ENCODE measurements at regions of chr15 and their contacts with region 1.

Region 1: DNA sequence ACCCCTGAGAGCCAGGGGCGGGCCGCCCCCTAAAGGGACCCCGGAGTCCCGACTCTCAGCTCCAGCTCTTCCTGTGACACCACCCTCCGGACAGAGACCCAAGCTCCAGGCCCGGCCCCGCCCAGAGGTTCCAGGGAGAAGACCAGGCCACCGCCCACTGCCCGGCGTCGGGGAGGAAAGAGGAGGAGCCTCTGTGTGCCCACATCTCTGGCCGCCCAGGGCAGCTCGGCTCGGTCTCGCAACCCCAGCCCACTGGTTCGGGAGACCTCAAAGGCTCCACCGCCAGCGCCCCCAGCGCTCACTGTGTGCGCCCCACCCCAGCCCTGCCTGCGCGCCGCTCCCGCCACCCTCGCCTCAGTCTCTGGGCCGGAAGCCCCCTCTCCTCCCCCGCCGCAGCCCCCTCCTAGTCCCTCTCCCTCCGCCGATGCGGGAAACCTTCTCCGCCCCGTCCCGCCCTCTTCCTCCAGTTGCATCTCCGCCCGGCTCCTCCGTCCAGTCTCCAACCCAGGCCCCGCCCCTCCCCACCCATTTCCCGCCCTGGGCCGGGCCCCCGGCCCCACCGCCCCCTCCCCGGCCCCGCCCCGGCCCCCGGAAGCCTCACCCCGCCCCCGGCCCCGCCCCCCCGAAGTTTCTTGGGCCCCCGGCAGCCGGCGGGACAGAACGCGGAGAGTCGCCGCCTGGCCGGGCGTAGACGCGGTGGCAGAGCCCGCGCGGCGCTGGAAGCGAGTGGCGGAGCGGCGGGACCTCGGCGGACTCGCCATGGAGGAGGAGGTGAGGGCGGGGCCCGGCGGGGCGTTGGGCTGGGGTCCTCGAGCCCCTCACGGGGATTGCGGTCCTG is at the start of gene PLEKHO2:
- DNase-seq: peak; percentile 53
- ATAC-seq: peak; percentile 75
- H3K4me3 ChIP-seq: peak within 1 kb of the TSS; percentile 99
- H3K27ac ChIP-seq: peak within 1 kb of the TSS; percentile 67
- H3K4me1 ChIP-seq: peaks cover 12% of the 10 kb centered on the region
- H3K27me3 ChIP-seq: no peaks in the 10 kb centered on the region
- CTCF ChIP-seq: peak; percentile 6 to 41 (median 11); a peak in 2 of 6 replicates
- EP300 ChIP-seq: no peak
- POLR2A ChIP-seq: peak; percentile 96
- RAD21 ChIP-seq: no peak
- polyA plus RNA-seq, gene PLEKHO2: 1.4 to 3.1 TPM

Region 2: GRCh38 chr15:64825431-64826294 is 15.8 kb before region 1 on chr15 and contains the start of gene PIF1:
- CTCF ChIA-PET with region 1: interaction called, 32 read pairs
- POLR2A ChIA-PET with region 1: interaction called, 16 read pairs
- RAD21 ChIA-PET with region 1: interaction called, 17 read pairs
- SMC1A ChIA-PET with region 1: interaction called, 6 read pairs
- in situ Hi-C with region 1: no loop called
- intact Hi-C with region 1: no loop called
- DNase-seq: peak; percentile 98
- ATAC-seq: peak; percentile 93
- H3K4me3 ChIP-seq: peak within 1 kb of the TSS; percentile 88
- H3K27ac ChIP-seq: peak within 1 kb of the TSS; percentile 85
- H3K4me1 ChIP-seq: peaks cover 14% of the 10 kb centered on the region
- H3K27me3 ChIP-seq: no peaks in the 10 kb centered on the region
- CTCF ChIP-seq: peak in 1 of 3 experiments; percentile 9; a peak in 1 of 6 replicates
- EP300 ChIP-seq: peak in 1 of 2 experiments; percentile 34; a peak in 1 of 4 replicates
- POLR2A ChIP-seq: peak; percentile 88
- RAD21 ChIP-seq: no peak
- polyA plus RNA-seq, gene PIF1: 3.7 to 7.2 TPM

Region 3: DNA sequence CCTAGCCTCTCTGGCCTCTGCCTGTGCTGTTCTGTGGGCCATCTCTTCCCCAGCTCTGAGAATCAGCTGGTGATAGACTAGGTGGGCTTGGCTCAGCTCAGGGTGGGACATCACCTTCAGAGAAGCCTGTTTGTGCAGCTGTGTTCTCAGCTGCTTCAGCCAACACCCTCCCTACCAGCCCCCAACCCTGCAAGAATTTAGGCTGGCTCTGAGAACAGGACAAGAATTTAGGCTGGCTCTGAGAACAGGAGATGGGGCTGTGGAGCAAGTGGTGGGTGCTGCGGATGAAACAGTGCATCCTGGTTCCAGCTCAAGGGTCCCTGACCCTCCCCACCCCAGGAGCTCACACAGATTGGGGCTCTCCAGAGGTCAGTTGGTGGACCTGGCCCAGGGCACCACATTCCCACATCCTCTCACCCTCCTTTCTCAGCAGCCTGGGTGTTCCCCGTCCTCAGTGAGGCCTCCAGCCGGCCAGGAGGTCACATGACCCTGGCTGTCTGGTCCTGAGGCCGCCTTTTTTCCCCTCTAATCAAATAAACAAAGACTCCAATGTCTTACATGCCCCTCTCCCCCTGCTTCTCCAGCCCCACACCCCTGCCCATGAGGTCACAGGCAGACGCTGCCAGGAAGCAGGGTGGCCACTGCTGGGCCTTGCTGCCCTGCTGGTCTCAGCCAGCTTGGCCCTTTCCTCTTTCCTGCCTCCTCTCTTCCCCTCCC is 15.1 kb after region 1 on chr15:
- CTCF ChIA-PET with region 1: no interaction called
- POLR2A ChIA-PET with region 1: interaction called, 7 read pairs
- RAD21 ChIA-PET with region 1: interaction called, 3 read pairs
- SMC1A ChIA-PET with region 1: interaction called, 13 read pairs
- in situ Hi-C with region 1: no loop called
- intact Hi-C with region 1: no loop called
- DNase-seq: no peak
- ATAC-seq: no peak
- H3K4me3 ChIP-seq: no peak overlapping the region
- H3K27ac ChIP-seq: no peak overlapping the region
- H3K4me1 ChIP-seq: no peaks in the 10 kb centered on the region
- H3K27me3 ChIP-seq: no peaks in the 10 kb centered on the region
- CTCF ChIP-seq: no peak
- EP300 ChIP-seq: no peak
- POLR2A ChIP-seq: no peak
- RAD21 ChIP-seq: no peak

Region 4: DNA sequence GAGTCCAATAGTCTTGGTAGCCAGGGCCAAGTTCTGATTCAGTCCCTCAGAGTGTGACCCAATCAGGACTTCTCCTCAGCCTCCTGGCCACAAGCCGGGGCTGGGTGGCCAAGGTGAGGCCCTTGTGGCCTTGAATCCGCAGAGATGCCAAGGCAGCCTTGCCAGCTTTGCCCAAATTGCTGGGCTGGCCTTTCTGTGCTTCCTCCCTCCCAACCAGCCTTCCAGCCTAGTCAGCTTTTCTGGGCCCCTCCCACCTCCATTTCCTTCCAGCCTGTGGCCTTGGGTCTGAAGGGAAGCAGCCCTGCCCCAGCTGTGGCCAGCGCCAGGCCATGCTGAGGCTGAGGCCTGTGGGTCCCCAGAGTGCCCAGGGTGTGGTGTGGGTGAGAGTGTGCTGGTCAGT is 36.0 kb after region 1 on chr15:
- CTCF ChIA-PET with region 1: interaction called, 19 read pairs
- POLR2A ChIA-PET with region 1: interaction called, 48 read pairs
- RAD21 ChIA-PET with region 1: interaction called, 56 read pairs
- SMC1A ChIA-PET with region 1: interaction called, 39 read pairs
- in situ Hi-C with region 1: no loop called
- intact Hi-C with region 1: no loop called
- DNase-seq: no peak
- ATAC-seq: no peak; the same call in 2 of the 3 replicates
- H3K4me3 ChIP-seq: no peak overlapping the region
- H3K27ac ChIP-seq: no peak overlapping the region
- H3K4me1 ChIP-seq: peaks cover 23% of the 10 kb centered on the region
- H3K27me3 ChIP-seq: no peaks in the 10 kb centered on the region
- CTCF ChIP-seq: no peak
- EP300 ChIP-seq: no peak
- POLR2A ChIP-seq: no peak
- RAD21 ChIP-seq: no peak

Region 5: DNA sequence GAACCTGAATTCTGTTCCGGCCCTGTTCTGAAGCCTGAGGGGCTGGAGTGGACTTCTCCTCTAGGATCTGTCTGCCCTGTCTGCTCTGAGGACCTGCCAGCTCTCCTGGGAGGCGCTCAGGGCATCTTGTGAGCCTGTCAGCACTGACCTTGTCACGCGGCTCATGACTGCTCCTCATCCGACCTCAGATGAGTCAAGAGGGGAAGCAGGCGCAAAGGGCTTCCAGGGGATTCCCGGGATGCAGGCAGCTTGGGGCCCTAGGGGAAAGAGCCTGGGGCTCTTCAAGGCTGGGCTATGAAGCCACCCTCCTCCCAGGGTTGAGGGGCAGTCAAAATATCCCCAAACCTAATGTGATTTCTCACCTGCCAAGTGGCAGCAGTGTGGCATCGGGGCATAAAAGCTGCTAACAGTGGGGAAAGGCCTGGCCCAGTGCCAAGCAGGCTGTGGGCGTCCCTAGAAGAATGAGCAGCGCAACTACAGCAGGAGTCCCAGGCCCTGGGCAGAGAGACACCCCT is 42.6 kb after region 1 on chr15:
- CTCF ChIA-PET with region 1: interaction called, 19 read pairs
- POLR2A ChIA-PET with region 1: interaction called, 127 read pairs
- RAD21 ChIA-PET with region 1: interaction called, 56 read pairs
- SMC1A ChIA-PET with region 1: interaction called, 39 read pairs
- in situ Hi-C with region 1: no loop called
- intact Hi-C with region 1: no loop called
- DNase-seq: peak; percentile 79
- ATAC-seq: peak; percentile 92
- H3K4me3 ChIP-seq: no peak overlapping the region
- H3K27ac ChIP-seq: peak overlapping the region; percentile 85
- H3K4me1 ChIP-seq: peaks cover 30% of the 10 kb centered on the region
- H3K27me3 ChIP-seq: no peaks in the 10 kb centered on the region
- CTCF ChIP-seq: no peak
- EP300 ChIP-seq: peak; percentile 44 to 62; a peak in 2 of 4 replicates
- POLR2A ChIP-seq: peak; percentile 65
- RAD21 ChIP-seq: no peak

Region 6: DNA sequence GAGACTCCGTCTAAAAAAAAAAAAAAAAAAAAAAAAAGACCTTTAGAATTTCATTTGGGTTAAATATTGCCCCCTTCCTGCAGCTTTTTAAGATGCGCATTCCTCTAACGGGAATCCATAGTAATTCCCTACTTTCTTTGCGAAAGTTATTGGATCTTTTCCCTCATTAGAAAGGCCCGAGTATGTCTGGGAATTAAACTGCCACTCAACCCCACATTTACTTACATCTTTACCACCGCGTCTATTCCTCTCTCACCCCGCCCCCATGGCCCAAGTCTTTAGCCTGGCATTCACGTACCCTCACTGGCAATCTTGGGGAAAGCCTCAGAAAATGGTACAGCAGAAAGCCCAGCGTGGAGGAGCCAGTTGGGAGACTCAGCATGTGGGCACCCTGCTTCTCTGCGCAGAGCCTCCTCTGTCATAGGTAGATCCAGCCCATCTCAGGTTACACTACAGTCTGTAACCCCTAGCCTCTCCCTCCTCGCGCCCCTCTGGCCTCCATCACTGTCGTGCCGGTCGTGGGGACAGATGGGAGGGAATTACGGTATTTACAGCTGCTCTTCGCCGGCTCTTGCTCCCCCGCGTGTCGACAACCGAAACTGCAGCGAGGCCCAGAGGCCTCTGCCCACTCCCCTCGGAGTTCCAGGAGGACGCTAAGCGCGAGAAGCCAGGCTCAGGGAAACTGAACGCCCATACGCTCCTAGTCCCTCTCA is 63.8 kb after region 1 on chr15:
- CTCF ChIA-PET with region 1: interaction called, 14 read pairs
- POLR2A ChIA-PET with region 1: no interaction called
- RAD21 ChIA-PET with region 1: interaction called, 11 read pairs
- SMC1A ChIA-PET with region 1: interaction called, 6 read pairs
- in situ Hi-C with region 1: no loop called
- intact Hi-C with region 1: no loop called
- DNase-seq: no peak
- ATAC-seq: peak; percentile 98
- H3K4me3 ChIP-seq: peak overlapping the region; percentile 46; the same call in 1 of the 2 replicates
- H3K27ac ChIP-seq: 0 out of 2 replicates have a peak overlapping the region, but pooled peaks have one; percentile 20
- H3K4me1 ChIP-seq: peaks cover 13% of the 10 kb centered on the region
- H3K27me3 ChIP-seq: no peaks in the 10 kb centered on the region
- CTCF ChIP-seq: peak; percentile 87 to 91 (median 88)
- EP300 ChIP-seq: no peak
- POLR2A ChIP-seq: peak; percentile 24; the same call in 1 of the 2 replicates
- RAD21 ChIP-seq: peak; percentile 86

Region 7: DNA sequence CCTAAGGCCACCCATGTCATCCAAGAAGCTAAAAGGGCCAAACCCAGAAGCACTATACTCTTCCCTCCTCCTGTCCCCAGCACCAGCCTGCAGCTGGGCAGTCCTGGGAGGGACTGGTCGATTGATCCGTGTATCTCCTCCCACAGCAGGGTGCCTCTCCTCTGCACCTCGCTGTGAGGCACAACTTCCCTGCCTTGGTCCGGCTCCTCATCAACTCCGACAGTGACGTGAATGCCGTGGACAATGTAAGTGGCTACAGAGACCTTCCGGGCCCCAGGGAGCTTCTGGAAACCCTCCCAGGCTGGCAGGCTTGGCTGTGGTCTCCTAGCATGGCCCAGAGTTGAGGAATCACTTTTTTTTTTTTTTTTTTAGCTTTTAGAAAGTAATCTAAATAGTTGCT is 100.8 kb after region 1 on chr15:
- CTCF ChIA-PET with region 1: no interaction called
- POLR2A ChIA-PET with region 1: no interaction called
- RAD21 ChIA-PET with region 1: no interaction called
- SMC1A ChIA-PET with region 1: no interaction called
- in situ Hi-C with region 1: no loop called
- intact Hi-C with region 1: no loop called
- DNase-seq: no peak
- ATAC-seq: no peak
- H3K4me3 ChIP-seq: no peak overlapping the region
- H3K27ac ChIP-seq: no peak overlapping the region
- H3K4me1 ChIP-seq: no peaks in the 10 kb centered on the region
- H3K27me3 ChIP-seq: no peaks in the 10 kb centered on the region
- CTCF ChIP-seq: no peak
- EP300 ChIP-seq: no peak
- POLR2A ChIP-seq: no peak
- RAD21 ChIP-seq: no peak

Measured in GM12878 (cell line).